OCI-LY7 (cell line): ENCODE measurements at regions of chr3 and their contacts with region 1.

Region 1: DNA sequence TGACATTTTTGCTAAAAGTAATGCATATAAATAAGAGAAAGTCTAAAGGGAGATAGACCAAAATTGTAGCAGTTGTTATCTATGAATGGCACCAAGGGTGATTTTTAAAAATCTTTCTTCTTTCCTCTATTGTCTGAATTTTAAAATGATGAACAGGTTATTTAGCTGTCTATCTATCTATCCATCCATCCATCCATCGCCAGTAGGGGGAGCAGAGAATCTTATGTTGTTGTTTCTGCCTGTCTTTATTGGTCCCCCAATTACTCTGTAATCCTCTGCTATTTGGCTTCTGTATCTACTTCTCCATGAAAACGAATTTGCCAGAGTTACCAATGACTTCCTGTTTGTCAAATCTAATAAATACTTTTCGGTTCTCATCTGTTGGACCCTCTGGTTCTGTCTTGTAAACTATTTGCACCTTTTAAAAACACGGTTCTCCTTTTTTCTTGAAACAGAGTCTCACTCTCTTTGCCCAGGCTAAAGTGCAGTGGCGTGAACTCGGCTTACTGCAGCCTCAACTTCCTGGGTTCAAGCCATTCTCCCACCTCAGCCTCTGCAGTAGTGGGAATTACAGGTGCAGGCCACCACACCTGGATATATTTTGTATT is 86.0 kb downstream of the ECT2 start:
- DNase-seq: peak; percentile 50
- H3K4me3 ChIP-seq: no peak overlapping the region
- H3K27ac ChIP-seq: no peak overlapping the region
- H3K4me1 ChIP-seq: no peaks in the 10 kb centered on the region
- CTCF ChIP-seq: peak; percentile 89

Region 2: GRCh38 chr3:172221547-172221946 is 614.9 kb before region 1 on chr3:
- CTCF ChIA-PET with region 1: no interaction called
- POLR2A ChIA-PET with region 1: no interaction called
- intact Hi-C with region 1: no loop called
- DNase-seq: no peak
- H3K4me3 ChIP-seq: no peak overlapping the region
- H3K27ac ChIP-seq: no peak overlapping the region
- H3K4me1 ChIP-seq: no peaks in the 10 kb centered on the region
- CTCF ChIP-seq: no peak

Region 3: DNA sequence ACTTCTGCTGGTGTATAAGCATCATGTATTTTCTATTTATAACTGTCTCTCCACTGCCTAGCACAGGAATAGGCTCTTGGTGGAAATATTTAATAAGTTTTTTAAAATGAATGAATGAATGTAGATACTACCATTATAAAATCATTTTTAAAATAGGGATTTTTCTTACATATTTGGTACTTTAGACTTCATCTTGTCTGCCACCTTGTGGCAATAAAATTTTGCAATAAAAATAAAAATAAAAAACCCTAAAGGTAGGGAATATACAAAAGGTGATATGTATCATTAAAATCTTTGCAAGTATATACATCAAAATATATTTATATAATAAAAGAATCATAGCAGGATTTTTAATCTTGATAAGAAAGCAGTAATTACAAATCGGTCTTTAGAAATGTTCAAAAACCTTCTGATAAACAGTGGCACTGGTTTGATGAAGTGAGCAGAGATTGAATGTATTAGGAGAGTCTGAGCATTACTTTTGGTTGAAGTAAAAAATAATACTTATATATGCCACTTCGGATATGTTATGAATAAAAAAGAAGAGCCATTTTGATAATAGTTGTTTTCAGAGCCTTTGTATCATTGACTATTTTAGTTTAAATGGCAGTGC is 209.4 kb after region 1 on chr3:
- CTCF ChIA-PET with region 1: no interaction called
- POLR2A ChIA-PET with region 1: no interaction called
- intact Hi-C with region 1: loop called (anchors 10 kb)
- DNase-seq: no peak
- H3K4me3 ChIP-seq: no peak overlapping the region
- H3K27ac ChIP-seq: no peak overlapping the region
- H3K4me1 ChIP-seq: no peaks in the 10 kb centered on the region
- CTCF ChIP-seq: peak; percentile 69

Region 4: DNA sequence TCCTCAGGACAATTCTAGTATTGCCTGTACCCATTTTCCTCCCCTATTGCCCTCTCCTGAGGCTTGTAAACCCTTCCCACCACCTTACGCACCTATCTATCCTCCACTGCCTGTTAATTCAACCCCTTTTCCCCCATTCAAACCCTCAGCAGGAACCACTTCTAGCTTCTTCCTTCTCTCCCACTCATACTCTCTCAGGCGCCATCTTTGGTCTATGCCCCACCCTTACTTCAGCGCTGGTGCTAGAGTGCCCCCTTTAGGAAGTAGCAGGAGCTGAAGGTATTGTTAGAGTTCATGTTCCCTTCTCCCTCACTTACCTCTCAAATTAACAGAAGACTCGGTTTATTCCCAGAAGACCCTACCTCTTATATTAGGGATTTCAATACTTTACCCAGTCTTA is 439.2 kb after region 1 on chr3:
- CTCF ChIA-PET with region 1: no interaction called
- POLR2A ChIA-PET with region 1: no interaction called
- intact Hi-C with region 1: loop called (anchors 10 kb)
- DNase-seq: peak; percentile 10
- H3K4me3 ChIP-seq: no peak overlapping the region
- H3K27ac ChIP-seq: no peak overlapping the region
- H3K4me1 ChIP-seq: no peaks in the 10 kb centered on the region
- CTCF ChIP-seq: peak; percentile 67

Region 5: DNA sequence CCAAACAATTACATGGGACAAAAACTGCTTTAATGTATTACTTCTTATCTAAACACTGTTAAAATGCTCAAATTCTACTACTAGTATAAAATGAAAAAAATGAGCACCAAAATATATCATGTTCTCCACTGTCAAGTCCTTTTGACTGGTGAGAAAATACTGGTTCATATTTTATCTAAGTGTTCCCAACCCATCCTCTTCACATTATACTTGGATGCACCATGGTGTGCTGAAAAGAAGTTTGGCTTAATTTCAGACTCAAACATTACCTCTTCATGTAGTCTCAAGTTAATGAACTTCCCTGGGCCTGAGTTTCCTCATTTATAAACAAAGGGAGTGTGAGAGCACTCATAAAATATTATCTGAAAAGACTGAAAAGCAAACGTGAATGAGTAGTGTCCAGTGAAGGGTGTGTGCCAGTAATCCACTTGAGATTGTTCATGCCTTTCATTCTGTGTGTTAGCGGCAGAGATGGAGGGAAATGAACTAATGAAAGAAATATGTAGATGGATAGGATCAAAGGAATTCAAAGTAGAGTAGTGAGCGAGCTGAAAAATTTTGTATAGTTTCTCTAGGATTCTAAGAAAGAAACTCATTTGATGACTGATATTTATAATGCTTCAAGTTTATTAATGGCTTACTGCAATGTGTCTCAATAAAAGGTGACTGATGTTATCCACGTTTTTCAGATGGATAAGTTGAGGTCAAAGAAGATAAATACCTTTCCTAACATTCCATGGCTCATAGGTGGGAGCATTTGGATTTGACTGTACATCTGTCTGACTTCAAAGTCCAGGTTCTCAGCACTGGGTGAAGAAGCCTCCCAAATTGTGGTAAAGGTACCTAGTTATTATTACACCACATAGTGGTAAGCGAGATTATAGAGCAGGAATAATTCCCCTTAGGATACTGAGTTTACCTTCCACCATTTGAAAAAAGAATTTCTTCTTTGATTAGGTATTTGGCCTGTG is 824.4 kb after region 1 on chr3:
- CTCF ChIA-PET with region 1: no interaction called
- POLR2A ChIA-PET with region 1: no interaction called
- intact Hi-C with region 1: no loop called
- DNase-seq: no peak
- H3K4me3 ChIP-seq: no peak overlapping the region
- H3K27ac ChIP-seq: no peak overlapping the region
- H3K4me1 ChIP-seq: no peaks in the 10 kb centered on the region
- CTCF ChIP-seq: no peak